ENCODE measurements at regions of chr17 and their contacts with region 1.

Region 1: DNA sequence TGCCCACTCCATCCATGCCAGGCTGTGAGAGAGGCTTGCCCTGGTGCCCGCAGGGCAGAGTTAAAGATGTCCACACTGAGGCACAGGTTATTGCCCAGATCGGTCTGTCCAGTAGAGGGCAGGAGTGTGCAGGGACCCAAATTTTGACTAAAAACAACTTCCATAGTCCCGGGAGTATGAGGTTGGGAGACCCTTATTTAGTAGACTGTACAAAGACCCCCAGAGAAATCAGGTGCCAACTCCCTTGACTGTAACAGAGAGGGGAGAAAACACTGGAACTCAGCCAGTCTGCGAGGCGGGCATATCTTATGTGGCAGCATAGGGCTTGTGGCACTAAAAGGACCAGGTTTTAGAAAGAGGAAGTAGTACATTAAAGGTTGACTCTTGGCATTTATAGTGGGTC is 43.4 kb downstream of the HNF1B start:
- DNase-seq: peak; percentile 69
- H3K4me3 Mint-ChIP-seq: no peak overlapping the region
- H3K27ac Mint-ChIP-seq: no peak overlapping the region
- H3K4me1 Mint-ChIP-seq: peaks cover 24% of the 10 kb centered on the region
- H3K27me3 Mint-ChIP-seq: peaks cover 76% of the 10 kb centered on the region

Region 2: GRCh38 chr17:37770631-37771518 is 69.4 kb after region 1 on chr17:
- CTCF ChIA-PET with region 1: interaction called, 29 read pairs
- DNase-seq: peak; percentile 62
- H3K4me3 Mint-ChIP-seq: no peak overlapping the region
- H3K27ac Mint-ChIP-seq: no peak overlapping the region
- H3K4me1 Mint-ChIP-seq: peaks cover 50% of the 10 kb centered on the region
- H3K27me3 Mint-ChIP-seq: peaks cover 62% of the 10 kb centered on the region

Region 3: DNA sequence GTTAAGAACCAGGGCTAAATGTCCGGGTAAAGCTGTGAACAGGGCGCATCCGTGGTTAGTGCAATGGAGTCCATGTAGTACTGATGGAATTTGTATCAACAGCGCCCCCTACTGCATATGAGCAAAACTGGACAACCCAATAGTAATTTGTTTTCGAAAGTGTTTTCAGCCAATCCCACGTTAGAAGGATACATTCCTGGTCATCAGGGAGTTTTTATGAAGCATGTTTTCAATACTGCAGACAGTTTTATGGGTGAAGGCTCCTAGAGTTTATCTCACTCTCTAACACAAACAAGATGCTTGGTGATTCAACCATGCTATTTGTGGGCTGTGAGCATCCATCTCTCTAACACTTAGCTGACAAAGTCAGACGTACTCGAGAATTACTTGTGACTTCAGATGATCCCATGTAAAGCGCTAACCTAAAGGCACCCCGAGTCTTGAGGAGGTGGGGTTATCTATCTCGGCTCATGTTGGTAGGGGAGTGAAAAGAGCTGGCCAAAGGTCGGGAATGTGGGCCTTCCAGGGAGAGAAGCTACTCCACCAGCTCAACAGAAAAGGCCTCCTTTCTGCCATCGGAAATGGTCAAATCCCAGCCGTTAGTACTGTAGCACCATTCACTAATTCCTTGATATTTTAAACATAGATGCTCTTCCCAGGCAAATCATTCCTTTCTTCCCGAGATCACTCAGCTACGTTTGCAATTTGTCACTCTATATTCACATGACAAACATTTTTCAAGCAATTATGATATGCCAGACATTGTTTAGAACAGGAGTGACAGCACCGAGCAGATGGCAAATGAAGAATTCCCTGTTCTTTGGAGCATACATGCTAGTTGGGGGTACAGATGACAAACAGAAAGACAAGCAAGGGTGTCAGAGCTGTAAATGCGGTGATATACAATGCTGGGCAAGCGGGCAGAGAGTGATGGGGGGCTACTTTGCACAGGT is 90.2 kb after region 1 on chr17:
- CTCF ChIA-PET with region 1: interaction called, 39 read pairs
- DNase-seq: peak; percentile 74
- H3K4me3 Mint-ChIP-seq: no peak overlapping the region
- H3K27ac Mint-ChIP-seq: no peak overlapping the region
- H3K4me1 Mint-ChIP-seq: peaks cover 4% of the 10 kb centered on the region
- H3K27me3 Mint-ChIP-seq: peaks cover 81% of the 10 kb centered on the region

Region 4: DNA sequence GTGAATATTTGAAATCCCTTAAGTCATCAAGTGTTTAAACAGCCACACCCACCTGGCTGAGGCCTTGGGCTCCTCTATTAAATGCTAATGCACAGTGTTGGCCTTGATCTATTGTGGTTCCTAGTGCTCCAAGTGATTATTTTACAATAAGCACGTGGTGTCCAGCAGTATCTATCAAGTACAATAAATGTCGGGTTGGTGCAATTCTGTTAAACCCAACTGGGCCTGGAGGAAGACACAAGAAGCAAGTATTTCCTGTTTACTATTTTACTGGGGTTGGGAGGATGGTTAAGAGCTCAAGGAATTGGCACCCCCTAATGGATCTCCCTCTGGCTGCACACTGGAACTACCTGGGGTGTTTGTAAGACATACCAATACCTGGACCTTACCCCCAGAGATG is 115.5 kb after region 1 on chr17:
- CTCF ChIA-PET with region 1: interaction called, 15 read pairs
- DNase-seq: no peak
- H3K4me3 Mint-ChIP-seq: no peak overlapping the region
- H3K27ac Mint-ChIP-seq: no peak overlapping the region
- H3K4me1 Mint-ChIP-seq: peaks cover 17% of the 10 kb centered on the region
- H3K27me3 Mint-ChIP-seq: peaks cover 58% of the 10 kb centered on the region

Measured in activated naive CD4-positive, alpha-beta T cell treated with anti-CD3 and anti-CD28 coated beads, Interleukin-2, amount 10 ng/mL, durations not matched to agents 7 days and 5 days (primary cell).